AG04449 (cell line): ENCODE measurements at regions of chr11 and their contacts with region 1.

Region 1: GRCh38 chr11:9015677-9016076 is 11.9 kb upstream of the NRIP3 start:
- DNase-seq: peak; percentile 5
- H3K4me3 ChIP-seq: no peak overlapping the region
- CTCF ChIP-seq: peak; percentile 81

Region 2: DNA sequence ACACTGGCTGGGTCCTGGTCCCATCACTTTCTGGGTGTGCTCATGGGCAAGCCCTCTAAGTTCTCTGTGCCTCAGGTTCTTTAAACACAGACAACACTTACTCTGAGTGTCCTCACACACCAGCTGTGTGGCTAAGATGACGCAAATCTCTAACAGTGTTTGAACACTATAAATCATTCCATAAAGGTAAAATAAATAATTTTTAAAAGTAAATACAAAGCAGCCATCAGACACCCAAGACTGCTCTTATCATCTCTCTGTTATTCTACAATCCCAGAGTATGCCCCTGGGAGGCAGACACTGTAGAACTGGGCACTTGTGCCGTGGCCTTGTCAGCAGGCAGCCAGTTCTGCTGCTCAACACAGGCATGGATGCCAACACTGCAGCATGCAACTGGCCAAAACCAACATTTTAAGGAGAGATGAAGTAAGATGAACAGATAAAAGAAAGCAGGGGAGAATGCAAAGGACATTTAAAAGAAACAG is 276.3 kb before region 1 on chr11:
- CTCF ChIA-PET with region 1: no interaction called
- POLR2A ChIA-PET with region 1: no interaction called
- DNase-seq: no peak
- H3K4me3 ChIP-seq: no peak overlapping the region
- CTCF ChIP-seq: no peak

Region 3: DNA sequence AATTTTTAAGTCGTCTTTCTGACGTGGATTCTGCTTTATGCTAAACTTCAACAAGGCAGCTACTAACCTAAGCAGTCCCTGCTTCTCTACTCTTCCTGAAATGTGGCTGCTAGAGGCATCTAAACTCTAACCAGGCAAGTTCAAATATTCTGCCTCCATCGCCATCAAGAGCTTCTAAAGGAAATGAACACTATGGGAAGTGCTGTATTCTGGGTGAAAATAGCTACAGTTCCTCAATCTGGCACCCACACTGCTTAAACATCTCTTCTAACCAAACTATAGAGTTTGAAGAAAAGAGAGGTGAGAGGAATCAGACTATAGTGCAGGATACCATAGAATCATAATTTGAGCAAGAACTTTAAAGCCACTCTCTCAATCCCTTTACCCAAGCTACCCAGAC is 18.2 kb before region 1 on chr11:
- CTCF ChIA-PET with region 1: interaction called, 53 read pairs
- POLR2A ChIA-PET with region 1: interaction called, 3 read pairs
- DNase-seq: no peak
- H3K4me3 ChIP-seq: no peak overlapping the region
- CTCF ChIP-seq: no peak

Region 4: GRCh38 chr11:9003573-9004309 is 11.9 kb before region 1 on chr11 and contains the start of gene NRIP3:
- CTCF ChIA-PET with region 1: interaction called, 53 read pairs
- POLR2A ChIA-PET with region 1: interaction called, 3 read pairs
- DNase-seq: no peak
- H3K4me3 ChIP-seq: peak within 1 kb of the TSS; percentile 65
- CTCF ChIP-seq: no peak

Region 5: DNA sequence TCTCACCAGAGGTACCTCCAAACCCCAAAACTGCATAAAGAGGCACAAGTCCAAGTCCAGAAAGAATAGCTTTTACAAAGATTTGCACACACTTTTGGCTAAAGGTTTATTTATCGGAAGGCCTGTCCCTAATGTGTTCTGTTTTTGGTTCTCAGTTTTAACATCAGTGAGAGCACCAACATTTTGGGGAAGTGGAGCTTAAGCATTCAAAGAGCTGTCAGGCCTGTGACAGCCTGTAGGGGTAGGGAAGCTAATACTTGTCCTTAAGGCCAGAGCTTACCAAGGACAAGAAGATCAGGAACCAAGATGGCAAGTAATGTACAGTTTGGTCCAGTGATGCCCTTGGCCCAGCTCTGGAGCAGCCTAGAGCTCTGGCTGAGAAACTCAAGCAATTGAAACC is 114.6 kb after region 1 on chr11:
- CTCF ChIA-PET with region 1: interaction called, 10 read pairs
- POLR2A ChIA-PET with region 1: no interaction called
- DNase-seq: no peak
- H3K4me3 ChIP-seq: no peak overlapping the region
- CTCF ChIP-seq: no peak